GM12878 (cell line): ENCODE measurements at regions of chr6 and their contacts with region 1.

Region 1: GRCh38 chr6:52577022-52577777 is at the start of gene TRAM2:
- DNase-seq: no peak
- ATAC-seq: peak; percentile 73
- H3K4me3 ChIP-seq: peak within 1 kb of the TSS; percentile 81
- H3K27ac ChIP-seq: peak within 1 kb of the TSS; percentile 86
- H3K4me1 ChIP-seq: peaks cover 30% of the 10 kb centered on the region
- H3K27me3 ChIP-seq: no peaks in the 10 kb centered on the region
- CTCF ChIP-seq: no peak
- EP300 ChIP-seq: no peak
- POLR2A ChIP-seq: peak; percentile 83
- RAD21 ChIP-seq: no peak
- polyA plus RNA-seq, gene TRAM2: 2.5 TPM

Region 2: DNA sequence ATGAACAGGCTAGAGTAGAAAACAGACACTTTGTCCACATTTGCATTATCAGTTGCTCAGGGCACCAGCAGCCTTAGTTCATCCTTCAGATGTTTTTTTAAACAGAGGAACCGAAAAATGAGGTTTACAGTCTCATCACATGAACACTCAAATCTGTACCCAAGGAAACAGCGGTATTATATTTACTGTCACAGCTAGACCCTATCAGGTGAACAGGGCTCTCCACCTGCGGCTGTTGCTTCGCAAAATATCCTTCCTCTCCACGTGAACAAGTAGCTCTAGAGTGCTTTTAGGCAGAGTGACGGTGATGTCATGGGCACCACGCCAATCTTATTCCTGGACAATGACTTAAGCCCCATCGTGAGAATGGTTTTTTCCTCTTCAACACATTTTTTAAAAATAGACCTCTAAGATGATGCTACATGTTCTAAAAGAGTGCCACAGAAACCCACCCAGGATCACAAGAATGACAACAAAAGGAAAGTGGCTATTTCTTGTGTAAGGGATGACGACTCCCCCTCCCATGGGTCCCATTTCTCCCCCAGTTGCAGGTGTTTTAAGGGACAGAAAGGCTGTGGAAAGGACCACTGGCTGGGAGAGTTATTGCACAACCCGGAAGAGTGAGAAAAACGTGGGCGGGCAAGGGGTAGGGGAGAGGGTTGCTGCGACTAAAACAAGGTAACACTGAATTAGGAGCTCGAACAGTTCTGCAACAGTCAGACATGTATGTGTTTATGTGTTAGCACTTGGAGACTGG is 79.4 kb before region 1 on chr6:
- CTCF ChIA-PET with region 1: interaction called, 14 read pairs
- POLR2A ChIA-PET with region 1: interaction called, 5 read pairs
- RAD21 ChIA-PET with region 1: interaction called, 21 read pairs
- SMC1A ChIA-PET with region 1: interaction called, 21 read pairs
- in situ Hi-C with region 1: no loop called
- intact Hi-C with region 1: loop called (anchors 2 kb)
- DNase-seq: peak; percentile 95
- ATAC-seq: peak; percentile 87
- H3K4me3 ChIP-seq: peak overlapping the region; percentile 61
- H3K27ac ChIP-seq: peak overlapping the region; percentile 96
- H3K4me1 ChIP-seq: peaks cover 64% of the 10 kb centered on the region
- H3K27me3 ChIP-seq: no peaks in the 10 kb centered on the region
- CTCF ChIP-seq: no peak
- EP300 ChIP-seq: peak; percentile 94 to 95
- POLR2A ChIP-seq: no peak; the same call in 1 of the 2 replicates
- RAD21 ChIP-seq: no peak

Region 3: DNA sequence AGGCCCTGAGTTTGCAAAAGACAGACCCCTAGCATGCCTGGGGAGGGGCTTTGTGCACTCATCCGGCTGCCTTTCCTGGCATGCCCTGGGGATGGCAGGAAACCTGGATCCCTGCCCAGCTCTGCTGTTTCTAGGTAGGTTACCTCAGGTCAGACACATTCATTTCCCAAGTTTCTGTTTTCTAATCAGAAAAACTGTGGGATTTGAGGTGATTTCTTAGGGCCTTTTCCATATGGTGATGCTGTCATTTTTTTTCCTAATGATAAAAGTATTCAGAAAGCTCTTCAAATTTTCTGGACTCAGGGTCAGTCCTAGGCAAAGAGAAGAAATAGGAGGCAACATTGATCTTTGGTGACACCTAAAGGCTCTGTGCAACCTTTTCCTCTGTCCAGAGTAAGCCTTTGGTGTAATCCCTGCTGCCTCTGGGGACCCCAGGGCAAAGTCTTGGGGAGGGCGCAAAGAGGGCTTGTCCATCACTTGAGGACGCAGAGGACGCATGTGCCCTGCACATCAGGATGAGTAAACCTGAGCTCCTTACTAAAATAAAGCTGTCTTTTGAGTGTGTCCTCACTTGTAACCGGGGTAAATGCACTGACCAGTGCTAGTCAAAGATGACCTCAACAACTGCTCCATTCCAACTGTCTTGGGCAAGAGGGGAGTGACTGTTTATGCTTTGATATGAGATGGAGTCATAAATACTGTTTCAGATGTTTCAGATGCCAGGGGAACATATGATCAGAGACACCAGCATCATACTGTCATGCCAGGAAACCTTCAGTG is 13.1 kb after region 1 on chr6:
- CTCF ChIA-PET with region 1: interaction called, 26 read pairs
- POLR2A ChIA-PET with region 1: interaction called, 8 read pairs
- RAD21 ChIA-PET with region 1: no interaction called
- SMC1A ChIA-PET with region 1: interaction called, 8 read pairs
- in situ Hi-C with region 1: no loop called
- intact Hi-C with region 1: no loop called
- DNase-seq: no peak
- ATAC-seq: peak; percentile 35; the same call in 1 of the 3 replicates
- H3K4me3 ChIP-seq: no peak overlapping the region
- H3K27ac ChIP-seq: no peak overlapping the region
- H3K4me1 ChIP-seq: peaks cover 14% of the 10 kb centered on the region
- H3K27me3 ChIP-seq: no peaks in the 10 kb centered on the region
- CTCF ChIP-seq: peak in 1 of 3 experiments; percentile 35; a peak in 2 of 6 replicates
- EP300 ChIP-seq: no peak
- POLR2A ChIP-seq: no peak
- RAD21 ChIP-seq: peak; percentile 52

Region 4: GRCh38 chr6:52598123-52598823 is 21.1 kb after region 1 on chr6:
- CTCF ChIA-PET with region 1: interaction called, 26 read pairs
- POLR2A ChIA-PET with region 1: interaction called, 8 read pairs
- RAD21 ChIA-PET with region 1: interaction called, 4 read pairs
- SMC1A ChIA-PET with region 1: interaction called, 8 read pairs
- in situ Hi-C with region 1: no loop called
- intact Hi-C with region 1: no loop called
- DNase-seq: no peak
- ATAC-seq: peak; percentile 53
- H3K4me3 ChIP-seq: no peak overlapping the region
- H3K27ac ChIP-seq: no peak overlapping the region
- H3K4me1 ChIP-seq: peaks cover 30% of the 10 kb centered on the region
- H3K27me3 ChIP-seq: no peaks in the 10 kb centered on the region
- CTCF ChIP-seq: peak; percentile 41 to 60 (median 51)
- EP300 ChIP-seq: no peak
- POLR2A ChIP-seq: no peak
- RAD21 ChIP-seq: peak; percentile 56

Region 5: GRCh38 chr6:54377776-54378175 is 1800.6 kb after region 1 on chr6:
- CTCF ChIA-PET with region 1: no interaction called
- POLR2A ChIA-PET with region 1: no interaction called
- RAD21 ChIA-PET with region 1: no interaction called
- SMC1A ChIA-PET with region 1: no interaction called
- in situ Hi-C with region 1: no loop called
- intact Hi-C with region 1: no loop called
- DNase-seq: no peak
- ATAC-seq: no peak
- H3K4me3 ChIP-seq: no peak overlapping the region
- H3K27ac ChIP-seq: no peak overlapping the region
- H3K4me1 ChIP-seq: no peaks in the 10 kb centered on the region
- H3K27me3 ChIP-seq: no peaks in the 10 kb centered on the region
- CTCF ChIP-seq: no peak
- EP300 ChIP-seq: no peak
- POLR2A ChIP-seq: no peak
- RAD21 ChIP-seq: no peak